ENCODE measurements at regions of chr5 and their contacts with region 1.

Region 1: DNA sequence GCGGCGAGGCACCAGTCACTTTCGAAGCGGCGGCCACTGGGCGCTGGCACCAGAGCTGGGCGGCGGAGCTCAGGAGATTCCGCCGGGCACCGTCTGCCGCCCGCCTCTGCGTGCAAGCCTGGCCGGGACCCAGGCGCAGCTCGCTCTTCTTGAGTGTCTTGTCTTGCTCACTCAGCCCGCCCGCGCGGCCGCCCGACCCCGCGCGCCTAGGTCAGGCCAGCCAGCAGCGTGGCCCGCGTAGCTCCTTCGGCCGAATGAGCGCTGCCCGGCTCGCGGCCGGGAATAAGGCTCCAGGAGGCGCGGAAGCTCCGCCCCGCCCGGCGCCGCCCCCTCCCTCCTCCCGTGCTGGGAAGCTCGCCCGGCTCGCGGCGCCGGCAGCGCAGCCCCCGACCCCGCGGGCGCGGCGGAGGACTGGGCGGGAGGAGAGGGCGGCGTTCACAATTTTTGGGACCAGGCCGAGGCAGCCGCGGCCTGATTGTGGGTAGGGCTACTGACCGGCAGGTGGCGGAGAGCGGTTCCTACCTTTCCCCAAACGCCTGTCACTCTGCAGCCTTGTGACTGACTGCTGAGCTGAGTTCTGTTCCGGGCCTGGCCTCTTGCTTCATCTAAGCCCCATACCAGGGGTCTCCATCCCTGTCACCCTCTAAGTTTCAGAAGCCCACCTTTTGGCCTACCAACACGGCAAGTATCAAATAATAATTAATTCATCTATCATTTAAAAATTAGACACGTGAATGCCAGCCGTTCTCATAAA is at the start of gene HBEGF:
- DNase-seq: peak; percentile 85
- H3K4me3 ChIP-seq: peak within 1 kb of the TSS; percentile 71 to 89
- H3K27ac ChIP-seq: peak within 1 kb of the TSS; percentile 75 to 79
- H3K4me1 ChIP-seq: peaks cover 8% of the 10 kb centered on the region
- H3K27me3 ChIP-seq: no peaks in the 10 kb centered on the region
- CTCF ChIP-seq: peak; percentile 10 to 69 (median 44)
- POLR2A ChIP-seq: peak; percentile 96
- total RNA-seq, gene HBEGF: 7.7 to 24.0 TPM

Region 2: DNA sequence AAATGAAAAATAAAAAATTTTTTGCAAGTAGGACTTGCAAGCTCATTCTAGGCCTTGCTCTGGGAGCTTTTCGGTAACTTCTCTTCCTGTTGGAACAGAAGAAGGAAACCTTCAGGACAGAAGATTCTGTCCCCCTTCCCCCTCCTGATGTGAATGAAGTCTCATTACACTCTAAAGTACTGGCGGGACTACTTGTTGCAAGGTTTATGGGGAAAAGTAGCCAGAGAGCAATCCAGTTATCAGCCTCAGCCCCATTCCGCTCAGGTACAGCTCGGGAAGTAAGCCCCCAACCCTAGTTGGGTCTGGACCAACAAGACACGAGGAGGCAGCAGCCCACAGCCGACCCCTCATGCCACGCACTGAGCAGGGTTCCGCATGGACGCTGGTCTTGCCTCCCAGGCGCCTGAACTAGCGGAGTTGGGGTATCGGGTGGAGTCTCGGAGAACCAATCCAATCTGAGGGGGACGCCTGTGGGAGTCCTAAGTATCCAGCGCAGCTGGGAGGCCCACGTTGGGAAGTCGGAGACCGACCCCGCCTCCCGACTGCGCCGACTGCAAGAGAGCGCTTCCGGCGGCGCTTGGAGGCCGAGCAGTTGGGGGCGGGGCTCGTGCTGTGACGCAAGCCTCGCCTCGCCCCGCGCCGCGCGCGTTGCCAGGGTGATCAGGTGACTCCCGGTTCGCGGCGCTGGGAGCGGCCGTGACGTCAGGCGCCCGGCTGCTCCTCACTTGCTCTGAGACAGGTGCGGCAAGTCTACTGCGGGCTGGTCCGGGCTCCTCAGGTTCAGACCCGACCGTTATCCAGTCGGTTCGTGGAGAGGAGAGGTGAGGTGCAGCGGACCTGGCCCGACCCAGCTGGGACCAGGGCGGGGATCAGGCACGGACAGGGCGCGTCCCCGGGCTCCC is 171.8 kb before region 1 on chr5 and contains the start of gene CYSTM1:
- intact Hi-C with region 1: loop called (anchors 5 kb)
- DNase-seq: peak; percentile 97
- H3K4me3 ChIP-seq: peak within 1 kb of the TSS; percentile 88 to 97
- H3K27ac ChIP-seq: peak within 1 kb of the TSS; percentile 99
- H3K4me1 ChIP-seq: no peaks in the 10 kb centered on the region
- H3K27me3 ChIP-seq: no peaks in the 10 kb centered on the region
- CTCF ChIP-seq: peak in 2 of 4 experiments; percentile 21 to 50
- POLR2A ChIP-seq: peak; percentile 97
- total RNA-seq, gene CYSTM1: 37.0 to 51.7 TPM

Region 3: DNA sequence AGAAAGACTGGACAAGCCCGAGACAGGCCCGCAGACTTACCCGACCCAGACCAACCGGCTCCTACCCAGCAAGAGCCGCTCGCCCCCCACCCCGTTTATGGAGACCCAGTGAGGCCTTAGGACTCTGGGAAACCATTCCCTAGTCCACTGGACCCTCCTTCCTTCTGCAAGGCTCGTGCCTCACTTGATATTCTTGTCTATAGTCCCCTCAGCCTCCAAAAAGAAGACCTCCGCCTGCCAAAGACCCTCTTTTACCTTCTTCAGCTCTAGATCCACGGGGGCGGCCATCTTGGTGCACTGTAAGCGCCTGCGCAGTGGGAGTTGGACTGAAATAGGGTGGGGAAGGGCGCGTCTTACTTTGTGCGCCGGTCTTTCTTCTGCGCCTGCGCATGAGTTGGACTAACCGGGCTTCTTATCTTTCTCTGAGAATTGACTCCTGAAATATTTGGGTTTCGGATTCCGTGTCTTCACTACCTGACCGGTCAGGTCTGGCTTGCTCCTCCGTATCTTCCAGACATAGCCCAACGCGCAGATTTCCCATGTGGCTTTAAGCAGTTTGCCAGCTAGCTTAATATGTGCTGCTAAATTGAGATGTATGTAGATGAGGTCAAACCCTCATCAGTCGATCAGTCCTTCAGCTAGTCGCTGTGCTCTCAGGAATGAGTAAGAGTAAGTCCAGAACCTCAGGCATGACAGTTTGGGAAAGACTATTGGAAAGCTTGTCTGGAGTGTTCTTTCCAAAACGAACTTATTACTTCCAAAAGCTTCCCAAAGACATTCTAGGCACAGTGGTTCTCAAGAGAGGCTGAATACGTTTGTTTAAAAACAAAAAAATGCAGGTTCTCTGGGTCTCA is 43.5 kb before region 1 on chr5 and contains the start of gene PFDN1:
- intact Hi-C with region 1: loop called (anchors 5 kb)
- DNase-seq: peak; percentile 91
- H3K4me3 ChIP-seq: peak within 1 kb of the TSS; percentile 52 to 71
- H3K27ac ChIP-seq: peak within 1 kb of the TSS; percentile 67 to 69
- H3K4me1 ChIP-seq: peaks cover 7% of the 10 kb centered on the region
- H3K27me3 ChIP-seq: no peaks in the 10 kb centered on the region
- CTCF ChIP-seq: no peak
- POLR2A ChIP-seq: peak; percentile 58
- total RNA-seq, gene PFDN1: 88.0 to 145 TPM

Measured in prostate gland (tissue), 2 donors.